ENCODE measurements at regions of chr7 and their contacts with region 1.

Region 1: GRCh38 chr7:38215735-38216670 is 38.0 kb downstream of the STARD3NL start:
- DNase-seq: peak; percentile 50 to 73 (median 65)
- ATAC-seq: peak; percentile 95
- H3K4me3 ChIP-seq: no peak overlapping the region
- H3K4me3 Mint-ChIP-seq: peak overlapping the region in 5 of 10 donors; percentile 1 to 45 (median 27)
- H3K27ac ChIP-seq: peak overlapping the region; percentile 27
- H3K27ac Mint-ChIP-seq: peak overlapping the region in 7 of 9 donors; percentile 5 to 72 (median 47)
- H3K4me1 ChIP-seq: peaks cover 8 to 57% of the 10 kb centered on the region in 2 donors
- H3K4me1 Mint-ChIP-seq: peaks cover 7 to 34% (median 10%) of the 10 kb centered on the region in 7 donors
- H3K27me3 ChIP-seq: no peaks in the 10 kb centered on the region
- H3K27me3 Mint-ChIP-seq: no peaks in the 10 kb centered on the region

Region 2: DNA sequence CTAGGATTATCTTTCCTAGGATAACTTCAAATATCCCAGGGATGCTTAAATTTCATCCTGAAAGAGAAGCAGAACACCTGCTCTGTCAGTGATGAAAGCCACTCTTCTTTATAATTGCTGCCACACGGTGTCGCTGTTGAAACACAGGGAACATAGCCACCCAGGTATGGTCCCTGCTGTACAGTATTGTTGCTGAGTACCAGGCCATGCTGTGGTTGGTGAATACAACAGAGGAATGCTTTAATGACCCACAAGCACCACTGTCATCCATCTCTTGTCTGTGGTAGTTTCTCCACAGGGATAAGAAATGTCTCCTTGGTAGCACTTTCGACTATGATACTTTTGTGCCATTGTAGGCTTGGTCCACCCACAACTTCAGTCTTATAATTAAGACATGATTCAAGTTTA is 108.5 kb before region 1 on chr7:
- CTCF ChIA-PET with region 1: interaction called, 64 read pairs
- POLR2A ChIA-PET with region 1: no interaction called
- intact Hi-C with region 1: loop called in 1 of 2 experiments (anchors 2 kb)
- DNase-seq: peak; percentile 16 to 58 (median 44)
- ATAC-seq: peak; percentile 88
- H3K4me3 ChIP-seq: no peak overlapping the region
- H3K4me3 Mint-ChIP-seq: no peak overlapping the region
- H3K27ac ChIP-seq: no peak overlapping the region
- H3K27ac Mint-ChIP-seq: no peak overlapping the region
- H3K4me1 ChIP-seq: no peaks in the 10 kb centered on the region
- H3K4me1 Mint-ChIP-seq: peaks cover 0 to 2% (median 0%) of the 10 kb centered on the region in 7 donors
- H3K27me3 ChIP-seq: no peaks in the 10 kb centered on the region
- H3K27me3 Mint-ChIP-seq: peaks cover 18 to 43% (median 23%) of the 10 kb centered on the region in 5 donors

Region 3: DNA sequence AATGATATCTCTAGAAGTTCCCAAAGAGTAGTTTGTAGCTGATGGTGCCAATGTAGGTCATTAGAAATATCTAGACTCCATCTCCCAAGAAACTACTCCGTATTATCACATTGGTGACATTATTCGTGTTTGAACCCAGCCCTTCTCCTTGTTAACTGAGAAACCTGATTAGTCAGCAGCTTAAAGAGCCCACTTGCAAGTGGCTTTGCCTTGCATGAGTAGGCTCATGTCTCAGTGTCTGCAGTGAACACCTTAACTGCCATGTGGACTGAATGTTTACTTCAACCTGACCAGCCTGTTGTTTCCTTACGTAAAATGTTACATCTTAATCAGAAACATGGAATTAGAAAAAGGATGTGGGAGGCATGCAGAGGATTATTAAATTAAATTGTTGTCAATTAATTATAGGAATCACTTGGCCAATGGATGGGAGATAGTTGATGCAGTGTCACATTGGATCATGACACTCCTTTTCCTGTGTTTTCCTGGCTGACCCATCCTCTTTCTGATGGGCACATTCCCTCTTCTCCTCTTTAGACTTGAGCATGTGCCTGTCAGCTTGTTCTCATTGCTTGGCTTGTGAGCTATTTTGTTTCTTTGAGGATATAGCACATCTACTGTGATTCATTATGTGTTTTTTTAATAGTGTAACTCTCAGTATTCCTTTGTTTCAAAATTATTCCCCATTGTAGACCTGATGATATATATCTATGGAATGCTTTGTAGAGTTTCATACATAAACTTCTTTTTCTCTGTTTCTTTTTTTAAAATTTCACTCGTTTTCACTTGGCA is 20.0 kb before region 1 on chr7:
- CTCF ChIA-PET with region 1: interaction called, 12 read pairs
- POLR2A ChIA-PET with region 1: interaction called, 4 read pairs
- intact Hi-C with region 1: no loop called
- DNase-seq: no peak
- ATAC-seq: no peak
- H3K4me3 ChIP-seq: no peak overlapping the region
- H3K4me3 Mint-ChIP-seq: no peak overlapping the region
- H3K27ac ChIP-seq: no peak overlapping the region
- H3K27ac Mint-ChIP-seq: no peak overlapping the region
- H3K4me1 ChIP-seq: no peaks in the 10 kb centered on the region
- H3K4me1 Mint-ChIP-seq: peaks cover 15 to 54% (median 43%) of the 10 kb centered on the region in 7 donors
- H3K27me3 ChIP-seq: no peaks in the 10 kb centered on the region
- H3K27me3 Mint-ChIP-seq: no peaks in the 10 kb centered on the region

Region 4: GRCh38 chr7:38369816-38370493 is 154.0 kb after region 1 on chr7:
- CTCF ChIA-PET with region 1: interaction called, 109 read pairs
- POLR2A ChIA-PET with region 1: interaction called, 5 read pairs
- intact Hi-C with region 1: loop called (anchors 1 kb)
- DNase-seq: peak; percentile 39 to 79 (median 63)
- ATAC-seq: peak; percentile 89
- H3K4me3 ChIP-seq: no peak overlapping the region
- H3K4me3 Mint-ChIP-seq: peak overlapping the region; percentile 9 to 64 (median 56)
- H3K27ac ChIP-seq: peak overlapping the region; percentile 64
- H3K27ac Mint-ChIP-seq: peak overlapping the region in 8 of 9 donors; percentile 85 to 97 (median 92)
- H3K4me1 ChIP-seq: peaks cover 47% of the 10 kb centered on the region in 2 donors
- H3K4me1 Mint-ChIP-seq: peaks cover 33 to 79% (median 69%) of the 10 kb centered on the region in 7 donors
- H3K27me3 ChIP-seq: no peaks in the 10 kb centered on the region
- H3K27me3 Mint-ChIP-seq: no peaks in the 10 kb centered on the region

Region 5: DNA sequence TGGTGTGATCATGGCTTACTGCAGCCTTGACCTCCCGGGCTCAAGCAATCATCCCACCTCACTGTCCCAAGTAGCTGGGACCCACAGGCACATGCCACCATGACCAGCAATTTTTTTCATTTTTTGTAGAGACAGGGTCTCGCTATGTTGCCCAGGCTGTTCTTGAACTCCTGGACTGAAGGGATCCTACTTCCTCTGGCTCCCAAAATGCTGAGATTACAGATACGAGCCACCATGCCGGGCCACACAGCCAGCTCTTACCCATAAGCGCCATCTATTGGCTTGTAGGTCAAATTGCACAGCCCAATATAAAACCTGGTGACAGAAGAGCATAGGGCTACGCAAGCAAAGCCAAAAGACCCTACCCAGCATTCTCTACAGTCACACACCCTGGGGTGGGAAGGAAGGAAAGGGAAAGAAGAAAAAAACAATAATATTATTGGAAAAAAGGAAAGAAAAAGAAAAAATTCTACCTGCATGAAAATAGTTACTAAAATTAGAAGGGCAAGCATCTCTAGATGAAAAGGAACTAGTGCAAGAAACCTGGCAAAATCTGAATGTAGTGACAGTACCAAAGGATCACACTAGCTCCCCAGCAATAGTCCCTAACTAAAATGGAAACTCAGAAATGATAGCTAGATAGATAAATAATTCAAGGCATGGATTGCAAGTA is 444.6 kb after region 1 on chr7:
- CTCF ChIA-PET with region 1: no interaction called
- POLR2A ChIA-PET with region 1: no interaction called
- intact Hi-C with region 1: loop called in 1 of 2 experiments (anchors 10 kb)
- DNase-seq: peak in 7 of 9 donors; percentile 7 to 51 (median 30)
- ATAC-seq: peak; percentile 78
- H3K4me3 ChIP-seq: no peak overlapping the region
- H3K4me3 Mint-ChIP-seq: no peak overlapping the region
- H3K27ac ChIP-seq: no peak overlapping the region
- H3K27ac Mint-ChIP-seq: no peak overlapping the region
- H3K4me1 ChIP-seq: no peaks in the 10 kb centered on the region
- H3K4me1 Mint-ChIP-seq: no peaks in the 10 kb centered on the region
- H3K27me3 ChIP-seq: no peaks in the 10 kb centered on the region
- H3K27me3 Mint-ChIP-seq: peaks cover 20 to 31% (median 27%) of the 10 kb centered on the region in 5 donors

Measured in naive thymus-derived CD4-positive, alpha-beta T cell (primary cell).